Breast epithelium (tissue), 4 donors: ENCODE measurements at regions of chr1 and their contacts with region 1.

Region 1: DNA sequence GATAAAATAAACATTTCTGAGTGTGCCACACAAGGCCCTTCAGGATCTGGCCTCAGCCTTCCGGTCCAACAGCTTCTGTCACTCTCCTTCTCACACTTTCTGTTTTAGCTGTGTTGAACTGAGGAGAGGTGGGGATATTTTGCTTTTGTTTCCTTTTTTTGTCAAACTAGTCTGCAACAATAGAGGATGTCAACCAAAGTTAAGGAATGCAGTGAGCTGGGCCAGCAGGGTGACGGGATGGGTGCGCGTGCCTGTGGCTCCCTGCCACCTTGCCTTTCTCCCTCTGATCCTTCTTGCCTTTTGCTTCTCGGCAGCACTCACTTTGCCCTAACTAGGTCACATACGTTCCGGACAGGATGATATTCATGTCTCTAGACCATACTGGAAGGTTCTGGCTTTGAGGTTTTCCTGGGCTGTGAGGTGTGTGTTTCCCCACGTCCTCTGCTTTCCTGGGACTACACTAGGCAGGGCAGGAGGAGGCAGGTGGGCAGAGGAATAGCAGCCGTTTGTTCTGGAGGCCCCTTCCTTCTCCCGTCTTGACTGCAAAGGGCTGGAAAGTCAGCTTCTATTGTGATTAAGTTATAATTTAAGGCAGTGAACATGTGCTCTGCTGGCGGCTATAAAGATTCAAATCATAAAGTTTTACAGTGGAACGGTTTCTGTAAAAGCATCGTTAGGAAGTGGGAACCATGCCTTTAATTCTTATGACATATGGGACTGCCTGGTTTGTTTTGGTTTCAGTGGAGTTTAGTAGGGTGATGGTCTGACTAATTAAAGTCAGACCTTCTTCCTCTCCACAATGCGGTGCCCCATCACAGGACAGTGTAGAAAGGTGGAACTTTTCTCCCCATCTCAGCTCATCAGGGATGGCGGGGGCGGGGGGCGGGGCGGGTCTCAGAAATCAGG is 67.8 kb downstream of the RNF220 start:
- DNase-seq: peak in 1 of 2 donors; percentile 24
- H3K4me3 ChIP-seq: peak overlapping the region in 1 of 3 donors; percentile 52
- H3K27ac ChIP-seq: peak overlapping the region in 1 of 2 donors; percentile 33
- H3K4me1 ChIP-seq: no peaks in the 10 kb centered on the region
- H3K27me3 ChIP-seq: no peaks in the 10 kb centered on the region
- CTCF ChIP-seq: no peak
- POLR2A ChIP-seq: no peak

Region 2: DNA sequence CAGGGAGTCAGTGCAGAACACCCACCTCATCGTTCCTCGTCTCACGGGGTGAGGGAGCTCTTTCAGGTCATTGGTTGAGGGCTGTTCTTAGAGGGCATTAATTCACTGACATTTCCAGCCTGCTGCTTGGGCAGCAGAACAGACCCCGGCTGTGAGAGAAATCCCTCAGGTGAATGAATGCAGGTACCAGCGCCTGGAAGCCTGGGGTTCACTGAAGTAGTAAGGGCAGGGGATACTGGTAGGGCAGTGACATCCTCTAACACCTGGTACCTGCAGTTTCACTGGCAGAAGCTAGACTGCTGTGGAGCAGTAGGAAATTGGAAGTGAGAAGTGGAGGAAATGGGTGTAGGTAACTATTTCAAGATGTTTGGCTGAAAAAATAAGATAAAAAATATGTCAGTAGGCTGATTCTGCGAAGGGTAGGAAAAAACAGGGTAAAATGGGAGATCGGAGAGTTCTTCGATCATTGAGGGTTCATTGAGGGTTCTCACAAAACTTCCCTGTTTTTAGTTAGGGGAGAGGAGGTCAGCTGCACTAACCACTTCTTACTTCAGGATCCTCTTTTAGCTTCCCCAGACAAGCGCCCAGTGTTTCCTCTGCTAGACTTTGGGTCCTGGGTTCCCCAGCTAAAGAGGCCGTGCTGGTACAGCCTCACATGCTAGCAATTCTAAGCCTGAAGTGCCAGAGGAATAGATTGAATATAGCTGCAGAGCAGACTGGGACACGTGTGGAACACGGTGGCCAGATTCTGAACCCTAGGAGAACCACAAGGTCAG is 12.6 kb before region 1 on chr1:
- intact Hi-C with region 1: loop called (anchors 1 kb)
- DNase-seq: no peak
- H3K4me3 ChIP-seq: no peak overlapping the region
- H3K27ac ChIP-seq: no peak overlapping the region
- H3K4me1 ChIP-seq: no peaks in the 10 kb centered on the region
- H3K27me3 ChIP-seq: peaks cover 0 to 15% of the 10 kb centered on the region in 2 donors
- CTCF ChIP-seq: no peak
- POLR2A ChIP-seq: no peak